CD4-positive, alpha-beta T cell (primary cell): ENCODE measurements at regions of chr1 and their contacts with region 1.

Region 1: DNA sequence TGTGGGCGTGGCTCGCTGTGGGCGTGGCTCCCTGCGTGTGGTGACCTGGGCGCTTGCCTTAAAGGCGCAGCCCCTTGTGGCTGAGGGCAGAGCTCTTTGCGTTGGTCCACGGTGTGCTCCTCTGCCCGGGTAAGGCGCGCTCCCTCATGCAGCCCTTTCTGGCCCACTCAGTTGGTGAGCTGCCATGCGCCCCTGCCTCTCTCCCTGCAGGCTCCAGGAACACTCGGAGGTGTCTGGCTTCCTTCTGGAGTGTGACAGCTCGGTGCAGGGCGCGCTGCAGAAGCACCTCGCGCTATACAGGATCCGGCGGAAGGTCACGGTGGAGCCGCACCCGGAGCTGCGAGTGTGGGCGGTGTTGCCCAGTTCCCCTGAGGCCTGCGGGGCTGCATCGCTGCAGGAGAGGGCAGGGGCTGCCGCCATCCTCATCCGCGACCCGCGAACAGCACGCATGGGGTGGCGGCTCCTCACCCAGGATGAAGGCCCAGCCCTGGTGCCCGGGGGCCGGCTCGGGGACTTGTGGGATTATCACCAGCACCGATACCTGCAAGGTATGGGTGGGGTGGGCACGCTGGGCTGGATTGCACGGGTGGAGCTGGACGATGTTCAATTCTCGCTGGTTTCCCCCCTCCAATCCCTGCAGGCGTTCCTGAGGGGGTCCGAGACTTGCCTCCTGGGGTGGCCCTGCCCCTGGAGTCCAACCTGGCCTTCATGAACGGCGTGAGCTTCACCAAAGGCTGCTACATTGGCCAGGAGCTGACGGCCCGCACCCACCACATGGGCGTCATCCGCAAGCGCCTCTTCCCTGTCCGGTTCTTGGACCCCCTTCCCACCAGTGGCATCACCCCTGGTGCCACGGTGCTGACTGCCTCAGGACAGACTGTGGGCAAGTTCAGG is 9.1 kb downstream of the IBA57 start:
- DNase-seq: peak in 6 of 14 experiments; percentile 25 to 81 (median 58)
- ATAC-seq: peak; percentile 69
- H3K4me3 ChIP-seq: no peak overlapping the region
- H3K4me3 Mint-ChIP-seq: peak overlapping the region; percentile 7
- H3K27ac ChIP-seq: no peak overlapping the region
- H3K27ac Mint-ChIP-seq: peak overlapping the region; percentile 36
- H3K4me1 ChIP-seq: peaks cover 6% of the 10 kb centered on the region
- H3K4me1 Mint-ChIP-seq: peaks cover 7% of the 10 kb centered on the region
- H3K27me3 ChIP-seq: no peaks in the 10 kb centered on the region
- H3K27me3 Mint-ChIP-seq: no peaks in the 10 kb centered on the region
- CTCF ChIP-seq: no peak

Region 2: DNA sequence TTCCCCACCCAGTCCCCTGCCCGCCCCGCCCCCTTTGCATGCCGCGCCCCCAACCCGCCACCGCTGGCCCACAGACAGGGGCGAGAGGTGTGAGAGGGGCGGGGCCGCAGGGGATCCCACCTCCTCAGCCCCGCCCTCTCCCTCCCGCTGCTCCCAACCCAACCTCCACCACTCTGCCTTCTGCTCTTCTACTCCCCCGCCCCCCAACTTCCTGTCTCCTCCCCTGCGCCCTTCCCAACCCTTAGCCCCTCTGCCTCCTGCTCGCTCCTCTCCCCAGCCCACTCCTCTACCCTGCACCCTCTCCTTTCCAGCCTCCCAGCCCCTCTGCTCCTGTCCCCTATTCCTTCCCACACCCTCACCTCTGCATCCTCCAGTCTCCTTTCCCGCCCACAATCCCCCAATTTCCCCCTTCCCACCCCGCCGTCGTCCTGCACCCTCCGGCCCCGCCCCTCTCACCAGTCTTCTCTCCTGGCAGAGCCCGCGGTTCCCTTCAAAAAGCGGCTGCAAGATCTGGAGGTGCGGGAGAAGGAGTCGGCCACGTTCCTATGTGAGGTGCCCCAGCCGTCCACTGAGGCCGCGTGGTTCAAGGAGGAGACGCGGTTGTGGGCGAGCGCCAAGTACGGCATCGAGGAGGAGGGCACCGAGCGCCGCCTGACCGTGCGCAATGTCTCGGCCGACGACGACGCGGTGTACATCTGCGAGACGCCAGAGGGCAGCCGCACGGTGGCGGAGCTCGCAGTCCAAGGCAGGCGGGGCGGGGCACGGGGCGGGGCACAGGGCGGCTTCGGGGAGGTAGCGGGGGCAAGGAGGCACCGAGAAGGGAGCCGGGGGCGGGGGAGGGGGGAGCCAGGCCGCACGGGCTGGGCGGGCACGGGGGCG is 38.5 kb after region 1 on chr1:
- CTCF ChIA-PET with region 1: interaction called, 3 read pairs
- POLR2A ChIA-PET with region 1: no interaction called
- intact Hi-C with region 1: loop called in 1 of 2 experiments (anchors 2 kb)
- DNase-seq: peak; percentile 83 to 96 (median 90)
- ATAC-seq: peak; percentile 89
- H3K4me3 ChIP-seq: peak overlapping the region; percentile 64
- H3K4me3 Mint-ChIP-seq: peak overlapping the region; percentile 92
- H3K27ac ChIP-seq: peak overlapping the region in 1 of 2 donors; percentile 21
- H3K27ac Mint-ChIP-seq: peak overlapping the region; percentile 86
- H3K4me1 ChIP-seq: peaks cover 22% of the 10 kb centered on the region
- H3K4me1 Mint-ChIP-seq: peaks cover 12% of the 10 kb centered on the region
- H3K27me3 ChIP-seq: no peaks in the 10 kb centered on the region
- H3K27me3 Mint-ChIP-seq: no peaks in the 10 kb centered on the region
- CTCF ChIP-seq: peak; percentile 59